Body of pancreas (tissue), 4 donors: ENCODE measurements at regions of chr11 and their contacts with region 1.

Region 1: DNA sequence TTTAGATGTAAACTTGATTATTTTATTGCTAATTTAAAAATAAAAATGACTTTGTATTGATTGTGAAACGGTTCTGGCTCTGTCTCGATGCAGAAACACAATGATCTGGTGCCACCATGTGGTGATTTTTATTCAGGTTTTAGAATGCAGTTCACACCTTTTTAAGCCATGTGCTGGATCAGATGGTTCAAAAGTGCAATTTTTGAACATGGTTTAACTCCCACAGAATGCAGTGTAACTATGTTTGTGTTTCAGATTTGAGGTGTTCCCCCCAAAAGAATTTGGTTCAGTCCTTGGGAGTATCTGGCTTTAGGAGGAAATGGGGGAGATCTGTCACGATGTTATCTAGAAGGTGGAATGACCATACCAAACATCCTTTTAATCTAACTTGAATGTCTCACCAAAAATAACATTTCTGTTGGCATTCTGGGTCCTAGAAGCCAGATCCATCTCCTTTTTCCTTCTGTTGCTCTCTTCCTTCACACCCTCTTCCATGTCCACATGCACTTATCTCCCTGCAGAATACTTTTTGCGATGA is 7.9 kb downstream of the MRPL16 start:
- DNase-seq: peak in 2 of 4 donors; percentile 26 to 66
- ATAC-seq: peak; percentile 85
- H3K4me3 ChIP-seq: no peak overlapping the region
- H3K27ac ChIP-seq: no peak overlapping the region
- H3K4me1 ChIP-seq: peaks cover 5% of the 10 kb centered on the region
- H3K27me3 ChIP-seq: no peaks in the 10 kb centered on the region
- CTCF ChIP-seq: peak in 6 of 7 experiments; percentile 51 to 86 (median 76)
- POLR2A ChIP-seq: no peak

Region 2: DNA sequence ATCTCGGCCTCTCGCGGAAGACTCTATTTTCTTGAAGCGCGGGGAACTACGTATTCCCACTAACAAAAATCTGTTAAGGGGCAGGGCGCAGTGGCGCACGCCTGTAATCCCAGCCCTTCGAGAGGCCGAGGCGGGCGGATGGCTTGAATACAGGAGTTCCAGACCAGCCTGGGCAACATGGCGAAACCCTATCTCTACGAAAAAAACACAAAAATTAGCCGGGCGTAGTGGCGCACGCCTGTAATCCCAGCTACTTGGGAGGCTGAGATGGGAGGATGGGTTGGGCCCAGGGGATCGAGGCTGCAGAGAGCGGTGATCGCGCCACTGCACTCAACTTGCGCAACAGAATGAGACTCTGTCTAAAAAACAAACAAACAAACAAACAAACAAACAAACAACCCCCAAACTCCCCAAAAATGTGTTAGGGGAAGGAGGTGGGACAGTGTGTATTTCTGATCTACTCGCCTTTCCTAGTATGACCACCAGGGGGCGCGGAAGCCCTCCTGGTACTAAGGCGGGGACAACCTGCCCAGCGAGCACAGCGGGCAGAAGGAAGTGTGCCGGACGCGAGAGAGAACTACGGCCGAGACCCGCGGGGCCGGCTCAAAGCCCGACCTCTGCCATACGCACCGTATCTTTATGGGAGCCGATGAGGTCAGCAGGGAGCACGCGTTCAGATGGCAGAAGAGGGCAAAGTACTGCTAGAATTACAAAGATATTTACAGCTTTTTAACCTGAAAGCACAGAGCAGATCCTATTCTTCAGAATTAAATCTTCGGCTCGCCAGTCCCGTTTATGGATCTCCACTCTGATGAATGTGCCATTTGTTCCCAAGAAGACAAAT is 48.8 kb before region 1 on chr11:
- intact Hi-C with region 1: loop called (anchors 5 kb)
- DNase-seq: peak; percentile 86 to 92 (median 88)
- ATAC-seq: peak; percentile 62
- H3K4me3 ChIP-seq: peak overlapping the region; percentile 53 to 81
- H3K27ac ChIP-seq: peak overlapping the region; percentile 96 to 98 (median 98)
- H3K4me1 ChIP-seq: peaks cover 31% of the 10 kb centered on the region
- H3K27me3 ChIP-seq: no peaks in the 10 kb centered on the region
- CTCF ChIP-seq: peak; percentile 90 to 97 (median 91)
- POLR2A ChIP-seq: peak in 1 of 3 donors; percentile 12

Region 3: DNA sequence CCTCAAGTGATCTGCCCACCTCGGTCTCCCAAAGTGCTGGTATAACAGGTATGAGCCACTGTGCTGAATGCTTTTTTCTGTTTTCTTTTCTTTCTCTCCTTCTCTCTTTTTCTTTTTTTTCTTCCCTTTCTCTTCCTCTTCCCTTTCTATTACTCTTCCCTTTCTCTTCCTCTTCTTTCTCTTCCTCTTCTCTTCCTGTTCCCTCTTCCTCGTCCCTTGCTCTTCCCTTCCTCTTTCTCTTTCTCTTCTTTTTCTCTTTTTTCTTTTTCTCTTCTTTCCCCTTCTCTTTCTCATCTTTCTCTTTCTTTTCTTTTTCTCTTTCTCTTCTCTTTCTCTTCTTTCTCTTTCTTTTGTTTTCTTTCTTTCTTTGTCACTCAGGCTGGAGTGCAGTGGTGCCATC is 136.8 kb after region 1 on chr11:
- intact Hi-C with region 1: no loop called
- DNase-seq: no peak
- ATAC-seq: no peak
- H3K4me3 ChIP-seq: no peak overlapping the region
- H3K27ac ChIP-seq: no peak overlapping the region
- H3K4me1 ChIP-seq: no peaks in the 10 kb centered on the region
- H3K27me3 ChIP-seq: no peaks in the 10 kb centered on the region
- CTCF ChIP-seq: no peak
- POLR2A ChIP-seq: no peak